ENCODE measurements at regions of chr18 and their contacts with region 1.

Region 1: GRCh38 chr18:62211325-62211828 is 24.3 kb downstream of the RELCH start:
- DNase-seq: no peak
- ATAC-seq: no peak
- H3K4me3 ChIP-seq: no peak overlapping the region
- H3K27ac ChIP-seq: no peak overlapping the region
- H3K4me1 ChIP-seq: peaks cover 0 to 14% (median 0%) of the 10 kb centered on the region in 9 donors
- H3K27me3 ChIP-seq: no peaks in the 10 kb centered on the region
- CTCF ChIP-seq: no peak

Region 2: DNA sequence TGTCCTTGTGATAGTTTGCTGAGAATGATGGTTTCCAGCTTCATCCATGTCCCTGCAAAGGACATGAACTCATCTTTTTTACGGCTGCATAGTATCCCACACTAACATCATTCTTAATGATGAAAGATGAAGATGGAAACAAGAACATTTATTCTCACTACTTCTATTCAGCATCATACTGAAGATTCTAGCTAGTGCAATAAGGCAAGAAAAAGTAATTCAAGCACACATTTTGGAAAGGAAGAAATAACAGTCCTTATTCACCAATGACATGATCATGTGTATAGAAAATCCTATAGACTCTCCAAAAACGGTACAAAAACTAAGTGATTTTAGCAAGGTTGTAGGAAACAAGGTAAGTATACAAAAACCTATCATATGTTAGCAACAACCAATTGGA is 12.9 kb after region 1 on chr18:
- intact Hi-C with region 1: loop called in 1 of 10 experiments (anchors 2 kb)
- DNase-seq: no peak
- ATAC-seq: no peak
- H3K4me3 ChIP-seq: no peak overlapping the region
- H3K27ac ChIP-seq: no peak overlapping the region
- H3K4me1 ChIP-seq: no peaks in the 10 kb centered on the region
- H3K27me3 ChIP-seq: no peaks in the 10 kb centered on the region
- CTCF ChIP-seq: no peak